ENCODE measurements at regions of chr10 and their contacts with region 1.

Region 1: GRCh38 chr10:78640796-78641636 is 427.8 kb upstream of the ZMIZ1 start:
- DNase-seq: no peak
- H3K4me3 ChIP-seq: no peak overlapping the region
- H3K27ac ChIP-seq: no peak overlapping the region
- H3K4me1 ChIP-seq: no peaks in the 10 kb centered on the region
- H3K27me3 ChIP-seq: no peaks in the 10 kb centered on the region
- CTCF ChIP-seq: no peak

Region 2: GRCh38 chr10:78109210-78109609 is 531.8 kb before region 1 on chr10:
- CTCF ChIA-PET with region 1: no interaction called
- dilution Hi-C with region 1: loop called (anchors 10 kb)
- in situ Hi-C with region 1: no loop called
- intact Hi-C with region 1: no loop called
- DNase-seq: no peak
- H3K4me3 ChIP-seq: no peak overlapping the region
- H3K27ac ChIP-seq: no peak overlapping the region
- H3K4me1 ChIP-seq: no peaks in the 10 kb centered on the region
- H3K27me3 ChIP-seq: no peaks in the 10 kb centered on the region
- CTCF ChIP-seq: no peak

Region 3: GRCh38 chr10:78672918-78673317 is 31.9 kb after region 1 on chr10:
- CTCF ChIA-PET with region 1: no interaction called
- dilution Hi-C with region 1: no loop called
- in situ Hi-C with region 1: no loop called
- intact Hi-C with region 1: no loop called
- DNase-seq: peak; percentile 14
- H3K4me3 ChIP-seq: no peak overlapping the region
- H3K27ac ChIP-seq: no peak overlapping the region
- H3K4me1 ChIP-seq: no peaks in the 10 kb centered on the region
- H3K27me3 ChIP-seq: peaks cover 4% of the 10 kb centered on the region
- CTCF ChIP-seq: no peak

Region 4: GRCh38 chr10:78712147-78712546 is 71.1 kb after region 1 on chr10:
- CTCF ChIA-PET with region 1: no interaction called
- dilution Hi-C with region 1: no loop called
- in situ Hi-C with region 1: no loop called
- intact Hi-C with region 1: no loop called
- DNase-seq: no peak
- H3K4me3 ChIP-seq: no peak overlapping the region
- H3K27ac ChIP-seq: no peak overlapping the region
- H3K4me1 ChIP-seq: peaks cover 3% of the 10 kb centered on the region
- H3K27me3 ChIP-seq: no peaks in the 10 kb centered on the region
- CTCF ChIP-seq: no peak

Measured in mammary epithelial cell (primary cell).